Dorsolateral prefrontal cortex (tissue), 120 donors: ENCODE measurements at regions of chr7 and their contacts with region 1.

Region 1: DNA sequence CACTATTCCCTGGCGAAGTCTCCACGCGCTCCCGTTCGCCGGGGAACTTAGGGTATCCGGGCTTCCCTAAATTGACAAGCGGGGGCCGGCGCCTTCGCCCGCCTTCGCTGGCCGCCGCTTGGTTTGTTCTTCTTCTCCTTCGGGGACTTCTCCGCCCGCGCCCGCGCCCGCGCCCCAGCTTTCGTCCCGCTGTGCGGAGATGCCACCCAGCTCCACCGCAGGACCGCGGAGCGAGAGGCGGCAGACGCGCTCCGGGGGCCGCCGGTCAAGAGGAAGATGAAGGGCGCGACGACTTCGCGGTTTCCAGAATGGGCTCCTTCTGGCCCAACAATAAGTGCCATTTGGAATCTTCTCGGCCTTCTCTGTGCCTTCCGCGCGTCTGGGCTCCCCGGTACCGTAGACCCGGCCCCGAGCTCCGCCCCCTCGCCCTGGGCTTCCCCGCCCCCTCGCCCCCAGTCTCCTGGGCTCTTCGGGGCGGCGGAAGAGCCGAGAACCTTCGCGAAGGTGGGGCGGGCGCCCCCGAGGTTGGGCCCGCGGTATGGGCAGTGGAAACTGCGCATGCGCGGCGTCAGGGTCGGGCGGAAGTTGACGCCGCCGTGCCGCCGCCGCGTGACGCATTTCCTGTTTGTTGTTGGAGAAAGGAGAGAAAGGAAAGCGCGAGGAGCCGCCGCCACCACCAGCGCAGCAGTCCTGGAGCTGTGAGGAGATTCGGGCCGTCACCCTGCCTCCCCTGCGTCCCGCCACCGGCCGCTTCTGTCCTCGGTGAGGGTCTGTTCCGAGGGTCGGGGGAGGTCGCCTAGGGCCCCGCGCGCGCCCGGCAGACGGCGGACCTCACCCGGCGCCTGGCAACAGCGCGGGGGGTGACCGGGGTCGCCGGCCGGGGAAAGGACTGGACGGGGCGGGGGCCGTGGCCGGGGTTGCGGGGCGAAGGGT is at the start of gene DNAJB6:
- DNase-seq: peak; percentile 76 to 95 (median 88)
- H3K4me3 ChIP-seq: peak within 1 kb of the TSS; percentile 58 to 97 (median 83)
- H3K27ac ChIP-seq: peak within 1 kb of the TSS; percentile 89 to 100 (median 100)
- H3K27me3 ChIP-seq: no peaks in the 10 kb centered on the region
- CTCF ChIP-seq: peak in 16 of 56 donors; percentile 4 to 34 (median 21)
- total RNA-seq, gene DNAJB6: 103 to 250 (median 160) TPM

Region 2: GRCh38 chr7:156892821-156893706 is 443.6 kb before region 1 on chr7 and contains the start of gene LMBR1:
- intact Hi-C with region 1: loop called in 1 of 2 experiments (anchors 10 kb)
- DNase-seq: peak; percentile 83 to 94 (median 92)
- H3K4me3 ChIP-seq: peak within 1 kb of the TSS; percentile 56 to 99 (median 90)
- H3K27ac ChIP-seq: peak within 1 kb of the TSS; percentile 10 to 96 (median 84)
- H3K27me3 ChIP-seq: no peaks in the 10 kb centered on the region
- CTCF ChIP-seq: peak in 52 of 56 donors; percentile 25 to 66 (median 52)
- total RNA-seq, gene LMBR1: 71.3 to 148 (median 106) TPM

Region 3: DNA sequence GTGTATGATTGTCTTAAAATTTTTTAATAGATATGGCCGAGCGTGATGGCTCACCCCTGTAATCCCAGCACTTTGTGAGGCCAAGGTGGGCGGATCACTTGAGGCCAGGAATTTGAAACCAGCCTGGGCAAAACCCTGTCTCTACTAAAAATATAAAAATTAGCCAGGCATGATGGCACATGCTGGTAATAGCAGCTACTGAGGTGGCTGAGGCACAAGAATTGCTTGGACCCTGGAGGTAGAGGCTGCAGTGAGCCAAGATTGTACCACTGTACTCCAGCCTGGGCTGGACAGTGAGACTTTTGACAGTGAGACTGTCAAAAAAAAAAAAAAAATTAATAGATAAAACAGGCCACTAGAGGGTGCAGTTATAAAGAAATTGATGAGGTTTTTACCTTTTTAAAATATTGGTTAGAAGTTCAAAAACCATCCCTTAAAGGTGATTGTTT is 366.7 kb before region 1 on chr7:
- intact Hi-C with region 1: loop called in 1 of 2 experiments (anchors 5 kb)
- DNase-seq: no peak
- H3K4me3 ChIP-seq: no peak overlapping the region
- H3K27ac ChIP-seq: no peak overlapping the region
- H3K27me3 ChIP-seq: no peaks in the 10 kb centered on the region
- CTCF ChIP-seq: peak in 55 of 56 donors; percentile 25 to 69 (median 51)

Region 4: DNA sequence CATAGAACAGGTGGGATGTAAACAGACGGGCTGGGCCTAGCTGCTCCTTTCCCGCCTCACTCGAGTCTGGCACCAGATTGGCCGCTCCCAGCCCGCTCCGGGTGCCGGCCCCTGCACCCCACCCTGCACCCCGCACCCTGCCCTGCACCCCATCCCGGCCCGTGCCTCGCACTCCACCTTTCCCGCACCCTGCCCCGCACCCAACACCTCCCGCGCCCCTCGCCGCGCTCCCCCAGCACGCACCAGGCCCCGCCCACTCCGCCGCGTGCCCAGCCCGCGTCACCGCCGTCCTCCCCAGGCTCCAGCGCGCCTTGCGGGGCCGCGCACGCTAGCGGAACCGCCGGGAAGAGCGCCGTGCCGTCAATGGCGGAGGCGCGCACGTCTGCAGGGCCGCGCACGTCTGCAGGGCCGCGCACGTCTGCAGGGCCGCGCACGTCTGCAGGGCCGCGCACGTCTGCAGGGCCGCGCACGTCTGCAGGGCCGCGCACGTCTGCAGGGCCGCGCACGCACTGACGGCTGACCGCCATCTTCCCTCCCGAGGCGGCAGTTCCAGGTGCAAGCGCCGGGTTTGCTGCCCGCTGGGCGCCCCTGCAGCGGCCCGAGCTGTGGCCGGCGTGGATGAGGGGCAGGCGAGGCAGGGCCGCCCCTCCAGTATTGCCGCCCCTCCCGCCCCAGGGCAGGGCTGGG is 198.1 kb before region 1 on chr7 and contains the start of gene UBE3C:
- intact Hi-C with region 1: loop called in 1 of 2 experiments (anchors 5 kb)
- DNase-seq: peak; percentile 70 to 93 (median 86)
- H3K4me3 ChIP-seq: peak within 1 kb of the TSS; percentile 58 to 95 (median 84)
- H3K27ac ChIP-seq: peak within 1 kb of the TSS; percentile 54 to 96 (median 90)
- H3K27me3 ChIP-seq: no peaks in the 10 kb centered on the region
- CTCF ChIP-seq: peak in 21 of 56 donors; percentile 5 to 44 (median 20)
- total RNA-seq, gene UBE3C: 46.9 to 76.5 (median 59.8) TPM

Region 5: DNA sequence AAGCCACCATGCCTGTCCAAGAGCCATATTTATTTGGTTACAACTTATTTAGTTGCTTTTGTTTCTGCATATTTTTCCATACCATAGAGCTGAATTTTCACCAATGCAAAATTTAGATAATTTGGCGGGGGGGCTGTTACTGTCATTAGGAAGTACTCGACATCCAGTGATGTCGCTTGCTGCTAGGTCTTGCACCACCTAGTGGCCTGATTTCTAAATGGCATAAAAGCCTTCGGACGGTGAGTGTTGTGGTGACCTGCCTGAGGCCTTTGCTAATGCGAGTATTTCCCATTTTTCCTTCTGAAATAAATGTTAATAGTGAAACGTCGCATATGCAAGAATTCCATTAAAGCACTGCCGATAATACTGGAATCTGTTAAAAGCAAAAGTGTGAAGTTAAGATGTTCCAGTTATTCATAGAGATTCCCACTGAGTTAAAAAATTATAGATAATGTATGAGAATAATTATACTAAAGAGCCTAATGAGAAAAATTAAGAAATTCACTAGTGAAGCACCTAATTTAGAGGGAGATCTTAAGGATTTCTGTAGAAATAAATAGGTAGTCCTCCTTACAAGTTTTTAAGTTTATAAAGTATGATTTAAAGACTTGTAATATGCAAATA is 85.9 kb before region 1 on chr7:
- intact Hi-C with region 1: loop called in 1 of 2 experiments (anchors 5 kb)
- DNase-seq: peak in 2 of 10 donors; percentile 45 to 53
- H3K4me3 ChIP-seq: no peak overlapping the region
- H3K27ac ChIP-seq: no peak overlapping the region
- H3K27me3 ChIP-seq: no peaks in the 10 kb centered on the region
- CTCF ChIP-seq: peak; percentile 55 to 84 (median 71)

Region 6: GRCh38 chr7:157273208-157274093 is 63.2 kb before region 1 on chr7:
- intact Hi-C with region 1: loop called in 1 of 2 experiments (anchors 5 kb)
- DNase-seq: peak in 8 of 10 donors; percentile 38 to 74 (median 55)
- H3K4me3 ChIP-seq: peak overlapping the region in 8 of 59 donors; percentile 4 to 31 (median 18)
- H3K27ac ChIP-seq: peak overlapping the region in 12 of 59 donors; percentile 1 to 80 (median 42)
- H3K27me3 ChIP-seq: peaks cover 0 to 8% (median 0%) of the 10 kb centered on the region in 45 donors
- CTCF ChIP-seq: peak; percentile 79 to 99 (median 96)

Region 7: GRCh38 chr7:158028290-158028941 is 691.8 kb after region 1 on chr7:
- intact Hi-C with region 1: no loop called
- DNase-seq: no peak
- H3K4me3 ChIP-seq: no peak overlapping the region
- H3K27ac ChIP-seq: no peak overlapping the region
- H3K27me3 ChIP-seq: peaks cover 0 to 3% (median 0%) of the 10 kb centered on the region in 45 donors
- CTCF ChIP-seq: no peak